ENCODE measurements at regions of chr2 and their contacts with region 1.

Region 1: GRCh38 chr2:156192468-156192867 is 140.1 kb downstream of the NR4A2 start:
- DNase-seq: peak in 1 of 2 donors; percentile 37
- ATAC-seq: no peak
- H3K4me3 ChIP-seq: no peak overlapping the region
- H3K4me3 Mint-ChIP-seq: no peak overlapping the region
- H3K27ac ChIP-seq: no peak overlapping the region
- H3K27ac Mint-ChIP-seq: no peak overlapping the region
- H3K4me1 ChIP-seq: no peaks in the 10 kb centered on the region
- H3K4me1 Mint-ChIP-seq: no peaks in the 10 kb centered on the region
- H3K27me3 ChIP-seq: peaks cover 3% of the 10 kb centered on the region
- H3K27me3 Mint-ChIP-seq: peaks cover 0 to 6% of the 10 kb centered on the region in 2 donors
- CTCF ChIP-seq: no peak

Region 2: DNA sequence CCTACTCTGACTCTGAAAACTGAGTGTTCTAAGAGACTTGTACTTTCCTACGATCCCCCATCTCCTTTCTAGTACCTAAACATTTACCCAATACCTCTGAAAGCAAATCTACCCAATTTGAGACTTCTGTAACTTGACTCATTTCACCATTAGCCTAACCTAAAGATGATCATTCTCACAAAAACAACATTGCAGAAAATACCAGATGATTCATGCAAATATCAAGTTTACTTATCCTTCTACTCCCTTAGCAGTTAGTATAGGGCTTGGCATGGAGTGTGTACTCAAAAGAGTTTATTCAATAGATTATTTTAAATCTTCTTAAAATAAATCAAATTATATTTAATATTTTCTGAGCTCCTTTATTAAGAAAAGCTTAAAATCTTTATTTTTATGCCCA is 50.4 kb after region 1 on chr2:
- intact Hi-C with region 1: no loop called
- DNase-seq: no peak
- ATAC-seq: no peak
- H3K4me3 ChIP-seq: no peak overlapping the region
- H3K4me3 Mint-ChIP-seq: no peak overlapping the region
- H3K27ac ChIP-seq: no peak overlapping the region
- H3K27ac Mint-ChIP-seq: no peak overlapping the region
- H3K4me1 ChIP-seq: no peaks in the 10 kb centered on the region
- H3K4me1 Mint-ChIP-seq: no peaks in the 10 kb centered on the region
- H3K27me3 ChIP-seq: no peaks in the 10 kb centered on the region
- H3K27me3 Mint-ChIP-seq: peaks cover 8 to 21% of the 10 kb centered on the region in 2 donors
- CTCF ChIP-seq: no peak

Region 3: DNA sequence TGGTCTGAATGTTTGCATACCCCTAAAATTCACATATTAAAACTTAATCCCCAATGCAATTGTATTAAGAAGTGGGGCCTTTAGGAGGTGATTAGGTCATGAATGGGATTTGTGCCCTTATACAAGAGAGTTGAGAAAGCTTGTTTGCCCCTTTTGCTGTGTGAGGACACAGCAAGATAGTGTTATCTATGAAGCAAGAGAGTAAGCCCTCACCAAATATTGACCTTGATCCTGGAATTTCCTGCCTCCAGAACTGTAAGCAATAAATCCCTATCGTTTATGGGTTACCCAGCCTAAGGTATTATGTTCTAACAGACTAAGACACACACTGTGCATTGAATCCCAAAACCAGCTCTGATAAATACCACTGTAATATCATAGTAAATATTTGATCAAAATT is 107.9 kb after region 1 on chr2:
- intact Hi-C with region 1: no loop called
- DNase-seq: no peak
- ATAC-seq: no peak
- H3K4me3 ChIP-seq: no peak overlapping the region
- H3K4me3 Mint-ChIP-seq: no peak overlapping the region
- H3K27ac ChIP-seq: no peak overlapping the region
- H3K27ac Mint-ChIP-seq: no peak overlapping the region
- H3K4me1 ChIP-seq: no peaks in the 10 kb centered on the region
- H3K4me1 Mint-ChIP-seq: no peaks in the 10 kb centered on the region
- H3K27me3 ChIP-seq: peaks cover 15% of the 10 kb centered on the region
- H3K27me3 Mint-ChIP-seq: peaks cover 18 to 34% of the 10 kb centered on the region in 2 donors
- CTCF ChIP-seq: no peak

Region 4: DNA sequence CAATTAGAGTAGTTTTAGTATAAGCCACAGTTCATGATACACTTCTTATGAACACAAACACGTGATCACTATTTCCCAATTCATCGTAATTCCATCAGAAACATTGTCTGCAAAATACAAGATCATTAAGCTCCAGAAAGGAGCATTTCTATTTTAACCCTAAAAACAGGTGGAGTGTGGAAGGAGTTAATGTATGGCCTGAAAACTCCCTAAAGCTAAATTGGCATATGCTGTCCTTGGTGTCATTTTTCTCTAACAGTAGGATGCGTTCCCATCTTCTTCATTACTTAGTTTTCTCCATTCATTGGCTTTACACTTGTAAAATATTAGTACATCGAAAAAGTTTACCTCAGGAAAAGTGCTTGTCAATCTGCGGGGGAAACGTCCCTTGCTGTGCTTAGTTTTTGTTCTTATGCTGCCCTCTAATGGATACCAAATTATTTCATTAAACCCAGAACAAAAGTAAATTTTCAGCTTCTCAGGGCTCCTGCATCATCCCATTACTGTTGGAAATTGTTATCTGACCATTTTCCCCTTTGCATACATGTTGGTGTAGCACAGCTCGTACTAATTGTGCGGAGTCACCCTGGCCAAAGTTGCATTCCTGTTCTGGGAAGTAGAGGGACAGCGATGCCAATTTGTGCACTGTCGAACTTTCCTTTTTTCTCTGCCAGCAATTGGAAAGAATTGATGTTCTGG is 397.1 kb after region 1 on chr2:
- intact Hi-C with region 1: loop called (anchors 5 kb)
- DNase-seq: peak in 1 of 2 donors; percentile 68
- ATAC-seq: peak in 2 of 3 donors; percentile 68 to 75
- H3K4me3 ChIP-seq: no peak overlapping the region
- H3K4me3 Mint-ChIP-seq: no peak overlapping the region
- H3K27ac ChIP-seq: no peak overlapping the region
- H3K27ac Mint-ChIP-seq: no peak overlapping the region
- H3K4me1 ChIP-seq: no peaks in the 10 kb centered on the region
- H3K4me1 Mint-ChIP-seq: no peaks in the 10 kb centered on the region
- H3K27me3 ChIP-seq: no peaks in the 10 kb centered on the region
- H3K27me3 Mint-ChIP-seq: no peaks in the 10 kb centered on the region
- CTCF ChIP-seq: peak; percentile 68

Measured in natural killer cell (primary cell).